ENCODE measurements at regions of chr3 and their contacts with region 1.

Region 1: GRCh38 chr3:147200545-147200944 is 205.8 kb downstream of the ZIC4 start:
- DNase-seq: no peak
- H3K4me3 ChIP-seq: no peak overlapping the region
- H3K27ac ChIP-seq: no peak overlapping the region
- H3K4me1 ChIP-seq: no peaks in the 10 kb centered on the region
- H3K27me3 ChIP-seq: peaks cover 0 to 3% of the 10 kb centered on the region in 2 donors
- CTCF ChIP-seq: no peak
- POLR2A ChIP-seq: no peak

Region 2: GRCh38 chr3:147257944-147258343 is 57.4 kb after region 1 on chr3:
- intact Hi-C with region 1: no loop called
- DNase-seq: no peak
- H3K4me3 ChIP-seq: no peak overlapping the region
- H3K27ac ChIP-seq: no peak overlapping the region
- H3K4me1 ChIP-seq: no peaks in the 10 kb centered on the region
- H3K27me3 ChIP-seq: no peaks in the 10 kb centered on the region
- CTCF ChIP-seq: no peak
- POLR2A ChIP-seq: no peak

Region 3: DNA sequence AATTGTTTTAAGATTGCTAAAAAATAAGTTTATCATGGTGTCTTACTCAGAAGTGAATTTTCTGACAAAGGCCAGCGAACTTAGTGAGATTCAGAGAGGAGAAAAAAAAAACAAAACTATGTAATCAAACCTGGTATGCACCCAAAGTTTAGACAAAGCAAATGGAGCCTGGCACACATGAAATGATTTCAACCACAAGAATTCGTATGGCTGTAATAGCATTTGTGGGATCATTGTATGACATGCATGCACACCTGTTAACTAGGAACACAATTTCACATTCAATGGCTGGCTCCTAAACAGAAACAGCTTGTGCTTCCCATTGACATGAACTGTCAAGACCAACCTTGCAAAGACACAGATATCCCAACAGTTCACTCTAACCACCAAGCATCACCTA is 111.2 kb after region 1 on chr3:
- intact Hi-C with region 1: no loop called
- DNase-seq: no peak
- H3K4me3 ChIP-seq: no peak overlapping the region
- H3K27ac ChIP-seq: no peak overlapping the region
- H3K4me1 ChIP-seq: no peaks in the 10 kb centered on the region
- H3K27me3 ChIP-seq: no peaks in the 10 kb centered on the region
- CTCF ChIP-seq: no peak
- POLR2A ChIP-seq: no peak

Region 4: DNA sequence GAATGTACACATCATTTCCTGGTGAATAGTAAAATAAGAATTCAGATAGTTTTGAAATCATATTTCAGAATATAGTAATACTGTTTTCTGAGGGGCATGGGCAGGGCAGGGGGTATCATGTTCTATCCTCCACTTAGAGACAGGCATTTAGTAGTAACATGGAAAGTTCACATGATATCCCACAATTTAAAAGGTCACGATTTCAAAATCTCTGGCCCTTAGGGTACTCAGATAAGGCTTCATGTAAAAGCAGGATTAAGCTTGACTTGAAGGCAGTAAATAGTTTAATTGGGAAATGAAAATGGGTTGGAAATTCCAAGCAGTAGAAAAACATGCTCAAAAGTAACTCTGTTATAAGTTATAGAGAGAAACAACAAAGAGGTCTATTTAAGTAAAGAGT is 1144.0 kb after region 1 on chr3:
- intact Hi-C with region 1: loop called (anchors 5 kb)
- DNase-seq: no peak
- H3K4me3 ChIP-seq: no peak overlapping the region
- H3K27ac ChIP-seq: no peak overlapping the region
- H3K4me1 ChIP-seq: no peaks in the 10 kb centered on the region
- H3K27me3 ChIP-seq: no peaks in the 10 kb centered on the region
- CTCF ChIP-seq: no peak
- POLR2A ChIP-seq: no peak

Region 5: DNA sequence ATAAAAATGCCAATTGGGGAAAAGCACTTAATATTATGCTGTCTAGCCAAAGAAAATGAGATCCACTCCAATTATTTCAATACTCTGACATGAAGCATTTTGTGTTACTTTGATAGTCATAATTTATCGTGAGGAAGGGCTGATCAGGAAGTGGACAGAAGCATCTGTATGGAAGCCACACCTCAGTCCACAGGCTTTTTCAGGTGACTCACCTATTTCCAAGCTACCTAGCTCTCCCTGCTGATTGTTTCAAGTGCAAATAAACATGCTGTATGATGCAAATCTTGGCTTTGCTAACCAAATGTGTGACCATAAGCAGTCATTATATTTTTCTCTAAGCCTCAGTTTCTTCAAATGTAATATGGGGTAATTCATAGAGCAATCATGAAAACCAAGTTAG is 1596.2 kb after region 1 on chr3:
- intact Hi-C with region 1: no loop called
- DNase-seq: no peak
- H3K4me3 ChIP-seq: no peak overlapping the region
- H3K27ac ChIP-seq: no peak overlapping the region
- H3K4me1 ChIP-seq: no peaks in the 10 kb centered on the region
- H3K27me3 ChIP-seq: no peaks in the 10 kb centered on the region
- CTCF ChIP-seq: no peak
- POLR2A ChIP-seq: no peak

Measured in breast epithelium (tissue), 4 donors.